ENCODE measurements at regions of chr12 and their contacts with region 1.

Region 1: DNA sequence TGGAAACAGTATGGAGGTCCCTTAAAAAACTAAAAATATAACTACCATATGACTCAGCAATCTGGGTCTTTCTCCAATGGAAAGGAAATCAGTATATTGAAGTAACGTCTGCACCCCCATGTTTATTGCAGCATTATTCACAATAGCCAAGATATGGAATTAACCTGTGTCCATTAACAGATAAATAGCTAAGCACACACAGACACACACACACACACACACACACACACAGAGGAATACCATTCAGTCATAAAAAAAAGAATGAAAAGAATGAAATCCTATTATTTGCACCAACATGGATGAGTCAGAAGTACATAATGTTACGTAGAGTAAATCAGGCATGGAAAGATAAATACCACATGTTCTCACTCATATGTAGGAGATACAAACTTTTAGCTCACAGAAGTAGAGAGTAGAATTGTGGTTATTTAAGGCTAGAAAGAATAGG is 4.7 kb downstream of the KLRK1 start:
- DNase-seq: peak; percentile 72
- H3K4me3 Mint-ChIP-seq: peak overlapping the region; percentile 7
- H3K27ac Mint-ChIP-seq: peak overlapping the region; percentile 74
- H3K4me1 Mint-ChIP-seq: peaks cover 17% of the 10 kb centered on the region
- H3K27me3 Mint-ChIP-seq: no peaks in the 10 kb centered on the region
- CTCF ChIP-seq: no peak

Region 2: DNA sequence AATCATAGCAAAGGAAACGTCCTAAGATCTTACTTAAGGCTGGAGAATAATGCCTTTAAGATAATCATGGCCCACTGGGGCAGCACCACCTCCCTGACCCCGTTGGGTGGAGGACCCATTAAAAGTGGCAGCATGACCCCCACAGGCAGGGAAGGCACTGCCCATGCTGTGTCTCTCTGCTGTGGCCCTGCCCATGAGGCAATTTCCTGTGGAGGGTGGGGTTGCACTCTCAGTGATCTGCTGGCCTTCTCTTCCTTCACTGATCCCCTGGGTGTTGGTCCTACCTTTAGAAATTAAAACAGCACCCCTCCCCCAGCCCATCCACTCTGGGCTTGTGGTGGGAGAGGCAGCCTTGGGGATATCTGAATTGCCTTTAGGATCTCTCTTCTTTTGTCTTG is 12.7 kb before region 1 on chr12:
- CTCF ChIA-PET with region 1: interaction called, 3 read pairs
- POLR2A ChIA-PET with region 1: interaction called, 135 read pairs
- intact Hi-C with region 1: no loop called
- DNase-seq: no peak
- H3K4me3 Mint-ChIP-seq: no peak overlapping the region
- H3K27ac Mint-ChIP-seq: peak overlapping the region; percentile 1
- H3K4me1 Mint-ChIP-seq: peaks cover 29% of the 10 kb centered on the region
- H3K27me3 Mint-ChIP-seq: no peaks in the 10 kb centered on the region
- CTCF ChIP-seq: no peak

Region 3: GRCh38 chr12:10395390-10395998 is 10.3 kb after region 1 on chr12:
- CTCF ChIA-PET with region 1: interaction called, 5 read pairs
- POLR2A ChIA-PET with region 1: interaction called, 17 read pairs
- intact Hi-C with region 1: no loop called
- DNase-seq: peak; percentile 93
- H3K4me3 Mint-ChIP-seq: peak overlapping the region; percentile 68
- H3K27ac Mint-ChIP-seq: peak overlapping the region; percentile 99
- H3K4me1 Mint-ChIP-seq: peaks cover 31% of the 10 kb centered on the region
- H3K27me3 Mint-ChIP-seq: no peaks in the 10 kb centered on the region
- CTCF ChIP-seq: no peak

Region 4: DNA sequence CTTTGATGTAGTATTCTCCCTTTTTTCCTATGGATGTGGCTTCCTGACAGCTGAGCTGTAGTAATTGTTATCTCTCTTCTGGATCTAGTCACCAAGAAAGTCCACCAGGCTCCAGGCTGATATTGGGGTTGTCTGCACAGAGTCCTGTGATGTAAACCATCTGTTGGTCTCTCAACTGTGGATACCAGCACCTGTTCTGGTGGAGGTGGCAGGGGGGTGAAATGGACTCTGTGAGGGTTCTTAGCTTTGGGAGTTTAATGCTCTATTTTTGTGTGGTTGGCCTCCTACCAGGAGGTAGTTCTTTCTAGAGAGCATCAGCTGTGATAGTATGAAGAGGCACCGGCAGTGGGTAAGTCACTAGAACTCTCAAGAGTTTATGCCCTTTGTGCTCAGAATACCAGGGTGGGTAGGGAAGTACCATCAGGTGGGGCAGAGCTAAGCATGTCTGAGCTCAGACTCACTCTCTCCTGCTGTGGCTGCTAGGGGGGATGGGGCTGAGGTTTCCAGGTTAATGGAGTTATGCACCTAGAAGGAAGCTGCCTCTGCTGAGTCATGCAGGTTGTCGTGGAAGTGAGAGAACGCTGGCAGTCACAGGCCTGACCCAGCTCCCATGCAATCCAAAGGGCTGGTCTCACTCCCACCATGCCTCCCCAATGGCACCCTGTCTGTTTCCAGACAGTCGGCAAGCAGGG is 556.9 kb after region 1 on chr12:
- CTCF ChIA-PET with region 1: no interaction called
- POLR2A ChIA-PET with region 1: no interaction called
- intact Hi-C with region 1: no loop called
- DNase-seq: peak; percentile 72
- H3K4me3 Mint-ChIP-seq: no peak overlapping the region
- H3K27ac Mint-ChIP-seq: peak overlapping the region; percentile 78
- H3K4me1 Mint-ChIP-seq: peaks cover 31% of the 10 kb centered on the region
- H3K27me3 Mint-ChIP-seq: no peaks in the 10 kb centered on the region
- CTCF ChIP-seq: no peak

Measured in MCF 10A (cell line).